ENCODE measurements at regions of chr2 and their contacts with region 1.

Region 1: GRCh38 chr2:11778923-11779757 is 32.7 kb downstream of the LPIN1 start:
- DNase-seq: peak; percentile 76

Region 2: DNA sequence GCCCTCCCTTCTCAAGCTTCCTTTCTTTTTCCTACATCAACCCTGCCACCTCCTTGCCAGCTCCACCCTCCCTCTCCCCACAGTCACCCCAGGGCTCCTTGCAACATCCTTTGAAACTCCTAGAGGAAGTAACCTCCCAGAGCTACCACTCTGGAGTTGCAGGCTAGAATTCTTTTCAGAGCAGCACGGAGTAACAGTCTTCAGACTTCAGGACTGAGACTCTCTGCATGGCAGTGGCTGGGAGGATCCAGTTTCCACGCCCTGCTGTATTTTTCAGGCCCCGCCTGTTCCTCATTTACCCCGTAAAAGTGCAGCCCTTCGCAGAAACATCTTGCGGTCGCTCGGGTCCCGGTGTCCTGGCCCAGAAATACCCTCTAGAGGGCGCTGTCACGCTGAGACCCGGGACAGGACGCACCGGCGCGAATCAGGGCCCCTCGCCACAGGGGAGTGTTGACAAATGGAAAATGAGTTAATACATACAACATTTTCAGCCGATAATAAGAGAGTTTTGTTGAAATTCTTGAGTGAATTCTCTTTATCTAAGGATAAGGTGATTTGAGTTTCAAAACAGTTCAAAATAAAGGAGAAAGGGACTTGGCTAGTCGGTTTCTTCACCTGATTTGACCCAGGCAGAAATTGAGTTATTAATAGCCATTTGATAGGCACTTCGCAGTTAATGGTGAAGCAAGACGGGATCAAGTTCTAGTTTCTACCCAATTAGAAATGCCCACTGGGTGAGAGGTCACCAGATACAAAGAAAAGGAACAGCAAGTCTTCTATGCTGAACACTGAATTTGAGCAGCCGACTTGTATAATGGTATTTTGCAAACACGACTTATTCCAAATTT is 90.7 kb before region 1 on chr2:
- in situ Hi-C with region 1: loop called (anchors 25 kb)
- DNase-seq: peak; percentile 91